Activated CD4-positive, alpha-beta memory T cell treated with anti-CD3 and anti-CD28 coated beads, Interleukin-2, amount 10 ng/mL, durations not matched to agents 7 days and 5 days (primary cell): ENCODE measurements at regions of chr2 and their contacts with region 1.

Region 1: DNA sequence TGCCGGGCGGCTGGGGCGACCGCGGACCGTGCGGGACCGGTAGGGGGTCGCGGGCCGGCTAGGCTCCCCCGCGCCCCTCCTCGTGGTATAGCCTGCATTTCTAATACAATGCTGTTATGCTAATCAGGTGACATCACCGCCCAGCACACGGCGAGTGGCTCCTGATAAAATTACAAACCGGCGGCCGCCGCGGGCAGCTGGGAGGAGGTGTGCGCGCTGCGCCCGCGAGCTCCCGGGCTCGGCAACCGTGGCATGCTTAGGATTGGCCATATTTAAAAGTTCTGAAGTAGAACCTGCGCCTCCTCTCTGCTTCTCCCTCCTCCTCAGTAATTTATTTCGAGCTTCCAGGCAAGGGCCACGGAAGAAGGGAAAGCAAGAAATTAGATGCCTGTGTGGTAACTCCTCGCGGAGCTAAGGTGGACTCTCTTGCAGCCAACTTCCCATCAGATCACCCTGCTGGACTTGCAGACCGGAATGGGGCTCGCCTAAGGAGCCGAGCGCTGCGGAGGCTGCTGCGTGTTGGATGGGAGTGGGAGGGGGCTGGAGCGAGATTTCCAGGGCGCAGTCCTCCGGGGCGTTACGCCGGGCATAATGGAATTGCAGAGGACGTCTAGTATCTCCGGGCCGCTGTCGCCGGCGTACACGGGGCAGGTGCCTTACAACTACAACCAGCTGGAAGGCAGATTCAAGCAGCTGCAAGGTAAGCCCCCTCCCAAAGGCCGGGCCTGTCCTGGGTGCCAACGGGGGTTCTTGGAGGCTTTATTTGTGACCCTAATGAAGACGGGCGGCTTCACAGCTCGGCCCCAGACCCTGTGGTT is 102.3 kb downstream of the SPTBN1 start:
- DNase-seq: peak; percentile 82
- H3K4me3 Mint-ChIP-seq: peak overlapping the region; percentile 91
- H3K27ac Mint-ChIP-seq: peak overlapping the region; percentile 89
- H3K4me1 Mint-ChIP-seq: peaks cover 35% of the 10 kb centered on the region
- H3K27me3 Mint-ChIP-seq: peaks cover 5% of the 10 kb centered on the region

Region 2: GRCh38 chr2:54350426-54350825 is 208.0 kb before region 1 on chr2:
- CTCF ChIA-PET with region 1: no interaction called
- POLR2A ChIA-PET with region 1: no interaction called
- DNase-seq: no peak
- H3K4me3 Mint-ChIP-seq: no peak overlapping the region
- H3K27ac Mint-ChIP-seq: no peak overlapping the region
- H3K4me1 Mint-ChIP-seq: no peaks in the 10 kb centered on the region
- H3K27me3 Mint-ChIP-seq: peaks cover 20% of the 10 kb centered on the region

Region 3: DNA sequence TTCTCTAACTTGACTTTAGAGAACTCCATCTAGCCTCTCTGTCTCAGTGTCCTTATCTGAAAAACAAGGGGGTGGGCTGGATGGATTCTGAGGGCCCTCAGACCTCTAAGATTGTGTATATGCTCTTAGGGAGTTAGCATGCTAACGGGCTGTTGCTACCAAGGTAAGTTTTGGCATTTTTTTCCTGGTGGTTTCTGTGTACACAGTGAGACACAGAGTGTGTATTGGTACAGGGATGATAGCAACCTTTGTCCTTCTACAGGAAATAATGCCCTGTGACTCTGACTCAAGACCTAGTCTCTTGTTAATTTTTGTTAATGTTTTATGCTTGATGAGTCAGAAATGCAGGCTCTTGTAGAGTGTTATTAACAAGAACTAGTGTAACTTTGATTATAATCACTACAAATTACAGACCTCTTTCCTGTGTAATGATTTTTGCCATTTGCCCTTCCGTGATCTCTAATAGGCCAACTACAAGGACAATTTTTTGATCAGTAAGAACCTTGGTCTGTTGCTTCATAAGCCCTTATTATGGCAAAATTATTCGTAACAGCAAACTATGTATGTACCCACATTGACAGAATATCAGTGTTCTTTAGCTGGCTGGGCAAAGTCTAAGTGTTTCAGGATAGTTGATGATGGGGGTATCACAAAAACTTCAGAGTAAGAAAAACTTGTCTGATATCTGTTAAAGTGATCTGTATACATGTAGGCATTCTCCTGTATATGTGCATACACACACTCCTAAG is 12.5 kb before region 1 on chr2:
- CTCF ChIA-PET with region 1: no interaction called
- POLR2A ChIA-PET with region 1: interaction called, 24 read pairs
- DNase-seq: no peak
- H3K4me3 Mint-ChIP-seq: no peak overlapping the region
- H3K27ac Mint-ChIP-seq: no peak overlapping the region
- H3K4me1 Mint-ChIP-seq: peaks cover 3% of the 10 kb centered on the region
- H3K27me3 Mint-ChIP-seq: peaks cover 3% of the 10 kb centered on the region

Region 4: GRCh38 chr2:54579684-54580620 is 21.6 kb after region 1 on chr2:
- CTCF ChIA-PET with region 1: interaction called, 76 read pairs
- POLR2A ChIA-PET with region 1: interaction called, 570 read pairs
- DNase-seq: no peak
- H3K4me3 Mint-ChIP-seq: no peak overlapping the region
- H3K27ac Mint-ChIP-seq: peak overlapping the region; percentile 34
- H3K4me1 Mint-ChIP-seq: peaks cover 81% of the 10 kb centered on the region
- H3K27me3 Mint-ChIP-seq: no peaks in the 10 kb centered on the region

Region 5: GRCh38 chr2:54597153-54597848 is 38.9 kb after region 1 on chr2:
- CTCF ChIA-PET with region 1: interaction called, 10 read pairs
- POLR2A ChIA-PET with region 1: interaction called, 132 read pairs
- DNase-seq: no peak
- H3K4me3 Mint-ChIP-seq: no peak overlapping the region
- H3K27ac Mint-ChIP-seq: peak overlapping the region; percentile 87
- H3K4me1 Mint-ChIP-seq: peaks cover 74% of the 10 kb centered on the region
- H3K27me3 Mint-ChIP-seq: no peaks in the 10 kb centered on the region

Region 6: DNA sequence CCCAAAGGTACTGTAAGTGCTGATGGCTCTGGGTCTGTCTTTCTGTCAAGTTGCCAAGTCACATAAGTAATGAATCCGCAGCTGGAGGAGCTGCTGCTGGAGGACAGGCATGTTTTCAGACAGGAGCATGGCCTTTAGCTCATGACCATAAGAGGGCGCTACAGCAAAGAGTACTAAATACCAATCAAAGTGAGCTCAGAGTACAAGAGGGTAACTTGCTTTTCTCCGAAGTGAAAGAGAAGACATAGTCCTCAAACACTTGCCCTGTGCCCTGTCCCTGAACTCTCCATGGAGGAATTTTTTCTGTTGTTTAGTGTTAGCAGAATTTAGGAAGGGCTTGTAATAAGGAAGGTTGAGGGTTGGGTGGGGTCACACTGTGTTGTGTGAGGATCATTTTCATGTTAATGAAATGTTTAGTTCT is 107.0 kb after region 1 on chr2:
- CTCF ChIA-PET with region 1: interaction called, 26 read pairs
- POLR2A ChIA-PET with region 1: interaction called, 3 read pairs
- DNase-seq: peak; percentile 47
- H3K4me3 Mint-ChIP-seq: no peak overlapping the region
- H3K27ac Mint-ChIP-seq: no peak overlapping the region
- H3K4me1 Mint-ChIP-seq: peaks cover 18% of the 10 kb centered on the region
- H3K27me3 Mint-ChIP-seq: no peaks in the 10 kb centered on the region

Region 7: GRCh38 chr2:54977149-54977548 is 418.8 kb after region 1 on chr2:
- CTCF ChIA-PET with region 1: no interaction called
- POLR2A ChIA-PET with region 1: no interaction called
- DNase-seq: no peak
- H3K4me3 Mint-ChIP-seq: no peak overlapping the region
- H3K27ac Mint-ChIP-seq: no peak overlapping the region
- H3K4me1 Mint-ChIP-seq: peaks cover 17% of the 10 kb centered on the region
- H3K27me3 Mint-ChIP-seq: no peaks in the 10 kb centered on the region

Region 8: GRCh38 chr2:55247025-55247424 is 688.6 kb after region 1 on chr2:
- CTCF ChIA-PET with region 1: no interaction called
- POLR2A ChIA-PET with region 1: no interaction called
- DNase-seq: no peak
- H3K4me3 Mint-ChIP-seq: no peak overlapping the region
- H3K27ac Mint-ChIP-seq: no peak overlapping the region
- H3K4me1 Mint-ChIP-seq: no peaks in the 10 kb centered on the region
- H3K27me3 Mint-ChIP-seq: no peaks in the 10 kb centered on the region